ENCODE measurements at regions of chr3 and their contacts with region 1.

Region 1: DNA sequence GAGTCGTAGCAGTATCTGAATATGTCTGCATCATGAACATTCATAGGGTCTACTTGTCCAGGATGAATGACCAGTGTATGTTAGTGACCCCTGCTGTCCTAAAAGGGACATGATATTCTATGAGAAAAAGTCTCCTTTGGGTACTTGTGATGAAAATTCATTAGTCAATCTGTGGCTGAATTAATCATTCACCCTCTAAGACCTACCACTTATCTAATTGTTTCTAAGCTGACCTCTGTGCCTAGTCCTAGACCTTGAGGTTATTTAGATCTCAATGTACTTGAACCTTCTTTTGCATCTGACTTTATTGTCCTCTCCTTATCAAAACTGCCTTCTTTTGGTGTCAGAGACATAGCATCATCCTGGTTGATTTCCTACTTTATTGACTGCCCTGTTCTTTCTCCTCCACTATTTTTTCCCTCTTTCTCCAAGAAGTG is 799.3 kb downstream of the DIPK2A start:
- DNase-seq: peak; percentile 93
- H3K4me3 ChIP-seq: no peak overlapping the region
- H3K27ac ChIP-seq: peak overlapping the region; percentile 88
- H3K4me1 ChIP-seq: peaks cover 43% of the 10 kb centered on the region
- H3K27me3 ChIP-seq: no peaks in the 10 kb centered on the region
- CTCF ChIP-seq: peak; percentile 28 to 50
- POLR2A ChIP-seq: peak; percentile 39

Region 2: DNA sequence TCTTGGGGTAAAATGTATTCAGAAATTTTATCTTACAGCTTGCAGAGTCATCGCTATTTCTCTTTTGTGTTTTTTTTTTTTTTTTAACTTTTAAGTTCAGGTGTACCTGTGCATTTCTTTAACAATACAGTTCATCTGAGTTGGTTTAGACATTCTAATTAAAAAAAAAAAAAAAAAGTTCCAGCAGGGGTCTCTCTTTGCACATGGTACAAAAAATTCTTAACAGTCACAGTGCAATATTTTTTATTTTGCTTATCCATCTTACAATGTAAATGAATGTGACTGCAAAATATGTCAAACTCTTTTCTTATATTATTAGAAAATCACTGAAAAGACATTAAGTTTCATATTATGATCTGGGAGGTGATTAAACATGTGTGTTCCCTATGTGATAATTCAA is 875.1 kb before region 1 on chr3:
- CTCF ChIA-PET with region 1: interaction called, 8 read pairs
- POLR2A ChIA-PET with region 1: no interaction called
- dilution Hi-C with region 1: no loop called
- intact Hi-C with region 1: loop called (anchors 1 kb)
- DNase-seq: peak; percentile 30
- H3K4me3 ChIP-seq: no peak overlapping the region
- H3K27ac ChIP-seq: no peak overlapping the region
- H3K4me1 ChIP-seq: peaks cover 3% of the 10 kb centered on the region
- H3K27me3 ChIP-seq: no peaks in the 10 kb centered on the region
- CTCF ChIP-seq: no peak
- POLR2A ChIP-seq: no peak

Region 3: DNA sequence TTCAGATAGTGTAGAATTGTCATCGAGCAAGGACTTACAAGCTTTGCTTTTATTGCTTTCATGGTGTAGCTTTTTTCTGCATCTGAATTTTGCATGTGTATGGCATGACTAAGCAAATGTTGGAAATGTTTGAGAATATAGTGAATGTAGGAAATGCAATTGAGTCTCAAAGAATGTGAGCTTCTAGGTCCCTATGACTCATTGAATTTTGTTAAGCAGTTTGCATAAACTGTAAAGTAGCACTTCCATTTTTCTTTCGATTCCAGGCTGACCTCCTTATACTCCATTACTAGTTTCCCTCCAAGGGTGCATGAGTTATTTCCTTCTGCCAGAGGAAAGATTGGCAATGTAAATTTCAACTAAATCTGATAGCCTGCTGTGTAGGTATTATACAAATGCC is 180.1 kb before region 1 on chr3:
- CTCF ChIA-PET with region 1: interaction called, 7 read pairs
- POLR2A ChIA-PET with region 1: no interaction called
- dilution Hi-C with region 1: no loop called
- intact Hi-C with region 1: loop called (anchors 1 kb)
- DNase-seq: peak; percentile 90
- H3K4me3 ChIP-seq: peak overlapping the region in 1 of 3 experiments; percentile 14
- H3K27ac ChIP-seq: peak overlapping the region; percentile 69
- H3K4me1 ChIP-seq: peaks cover 37% of the 10 kb centered on the region
- H3K27me3 ChIP-seq: no peaks in the 10 kb centered on the region
- CTCF ChIP-seq: no peak
- POLR2A ChIP-seq: no peak

Region 4: GRCh38 chr3:144840866-144841265 is 69.9 kb after region 1 on chr3:
- CTCF ChIA-PET with region 1: no interaction called
- POLR2A ChIA-PET with region 1: no interaction called
- dilution Hi-C with region 1: no loop called
- intact Hi-C with region 1: loop called (anchors 2 kb)
- DNase-seq: peak; percentile 51
- H3K4me3 ChIP-seq: no peak overlapping the region
- H3K27ac ChIP-seq: peak overlapping the region; percentile 40
- H3K4me1 ChIP-seq: peaks cover 18% of the 10 kb centered on the region
- H3K27me3 ChIP-seq: no peaks in the 10 kb centered on the region
- CTCF ChIP-seq: no peak
- POLR2A ChIP-seq: no peak

Region 5: DNA sequence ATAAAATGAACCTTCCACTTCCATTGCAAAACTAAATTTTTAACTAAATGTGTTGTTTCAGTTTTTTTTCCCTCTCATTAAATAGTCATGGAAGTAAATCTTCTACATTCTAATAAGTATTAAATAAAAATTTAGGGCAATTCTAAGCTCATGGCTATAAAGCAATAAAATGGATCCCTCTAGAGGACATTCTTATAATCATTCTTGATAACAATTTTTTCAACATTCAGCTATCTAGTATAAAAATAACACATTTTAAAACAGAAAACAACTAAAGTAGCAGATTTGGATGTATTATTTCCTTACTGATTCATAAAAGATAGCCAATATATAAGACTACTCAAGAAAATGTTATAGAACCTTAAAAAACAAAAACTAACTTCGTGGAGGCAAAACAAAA is 997.0 kb after region 1 on chr3:
- CTCF ChIA-PET with region 1: interaction called, 8 read pairs
- POLR2A ChIA-PET with region 1: no interaction called
- dilution Hi-C with region 1: no loop called
- intact Hi-C with region 1: loop called (anchors 2 kb)
- DNase-seq: peak; percentile 40
- H3K4me3 ChIP-seq: no peak overlapping the region
- H3K27ac ChIP-seq: no peak overlapping the region
- H3K4me1 ChIP-seq: no peaks in the 10 kb centered on the region
- H3K27me3 ChIP-seq: no peaks in the 10 kb centered on the region
- CTCF ChIP-seq: peak; percentile 12 to 15
- POLR2A ChIP-seq: no peak

Region 6: GRCh38 chr3:146065573-146066006 is 1294.7 kb after region 1 on chr3:
- CTCF ChIA-PET with region 1: no interaction called
- POLR2A ChIA-PET with region 1: no interaction called
- dilution Hi-C with region 1: no loop called
- intact Hi-C with region 1: no loop called
- DNase-seq: peak; percentile 80
- H3K4me3 ChIP-seq: no peak overlapping the region
- H3K27ac ChIP-seq: no peak overlapping the region
- H3K4me1 ChIP-seq: peaks cover 4% of the 10 kb centered on the region
- H3K27me3 ChIP-seq: no peaks in the 10 kb centered on the region
- CTCF ChIP-seq: peak; percentile 27 to 30
- POLR2A ChIP-seq: no peak

Measured in endothelial cell of umbilical vein (primary cell).